Heart left ventricle (tissue), 16 donors: ENCODE measurements at regions of chr2 and their contacts with region 1.

Region 1: DNA sequence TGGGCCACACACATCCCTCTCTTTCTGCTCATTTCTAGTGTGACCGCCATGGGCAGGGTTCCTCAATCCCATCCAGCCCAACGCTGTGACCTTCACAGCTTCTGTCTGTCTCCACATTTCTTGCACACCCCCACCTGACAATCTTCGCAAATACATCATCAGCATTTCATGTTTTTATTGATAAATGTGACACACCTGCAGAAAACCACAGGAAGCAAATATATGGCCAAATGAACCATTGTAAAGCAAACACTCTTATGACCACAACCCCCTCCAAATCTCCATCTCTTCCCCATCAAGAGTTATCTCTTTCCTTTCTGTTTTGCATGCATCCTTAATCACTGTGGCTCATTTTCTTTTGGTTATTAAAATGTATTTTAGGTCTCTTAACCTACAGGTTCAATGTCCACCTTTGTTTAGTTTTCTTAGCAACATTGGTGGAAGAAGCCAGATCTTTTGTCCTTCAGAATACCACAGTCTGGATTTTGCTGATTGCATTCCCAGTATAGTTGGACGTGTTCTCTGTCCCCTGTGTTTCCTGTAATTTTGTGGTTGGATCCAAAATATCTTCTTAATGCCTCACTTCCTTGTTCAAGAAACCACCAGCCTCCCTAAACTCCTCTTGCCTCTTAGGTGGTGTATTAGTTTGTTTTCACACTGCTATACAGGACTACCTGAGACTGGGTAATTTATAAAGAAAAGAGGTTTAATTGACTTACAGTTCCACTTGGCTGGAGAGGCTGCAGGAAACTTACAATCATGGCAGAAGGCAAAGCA is 9.8 kb upstream of the NCK2 start:
- DNase-seq: no peak
- ATAC-seq: peak; percentile 16 to 69 (median 46)
- H3K4me3 ChIP-seq: no peak overlapping the region
- H3K27ac ChIP-seq: peak overlapping the region in 5 of 12 donors; percentile 5 to 49 (median 42)
- H3K4me1 ChIP-seq: peaks cover 0 to 53% (median 23%) of the 10 kb centered on the region in 12 donors
- H3K27me3 ChIP-seq: no peaks in the 10 kb centered on the region
- CTCF ChIP-seq: no peak
- POLR2A ChIP-seq: no peak

Region 2: GRCh38 chr2:105610576-105611332 is 124.2 kb before region 1 on chr2:
- intact Hi-C with region 1: loop called in 3 of 10 experiments (anchors 5 to 10 kb)
- DNase-seq: no peak
- ATAC-seq: no peak
- H3K4me3 ChIP-seq: no peak overlapping the region
- H3K27ac ChIP-seq: no peak overlapping the region
- H3K4me1 ChIP-seq: peaks cover 0 to 10% (median 2%) of the 10 kb centered on the region in 12 donors
- H3K27me3 ChIP-seq: no peaks in the 10 kb centered on the region
- CTCF ChIP-seq: no peak
- POLR2A ChIP-seq: no peak